ENCODE measurements at regions of chr7 and their contacts with region 1.

Region 1: GRCh38 chr7:142811154-142811737 is 40.5 kb downstream of the PRSS2 start:
- DNase-seq: peak; percentile 86
- H3K4me3 Mint-ChIP-seq: peak overlapping the region; percentile 73
- H3K27ac Mint-ChIP-seq: peak overlapping the region; percentile 99
- H3K4me1 Mint-ChIP-seq: peaks cover 75% of the 10 kb centered on the region
- H3K27me3 Mint-ChIP-seq: peaks cover 2% of the 10 kb centered on the region

Region 2: GRCh38 chr7:142301923-142302550 is 509.2 kb before region 1 on chr7:
- intact Hi-C with region 1: loop called (anchors 1 kb)
- DNase-seq: peak; percentile 65
- H3K4me3 Mint-ChIP-seq: no peak overlapping the region
- H3K27ac Mint-ChIP-seq: no peak overlapping the region
- H3K4me1 Mint-ChIP-seq: peaks cover 5% of the 10 kb centered on the region
- H3K27me3 Mint-ChIP-seq: peaks cover 19% of the 10 kb centered on the region

Region 3: DNA sequence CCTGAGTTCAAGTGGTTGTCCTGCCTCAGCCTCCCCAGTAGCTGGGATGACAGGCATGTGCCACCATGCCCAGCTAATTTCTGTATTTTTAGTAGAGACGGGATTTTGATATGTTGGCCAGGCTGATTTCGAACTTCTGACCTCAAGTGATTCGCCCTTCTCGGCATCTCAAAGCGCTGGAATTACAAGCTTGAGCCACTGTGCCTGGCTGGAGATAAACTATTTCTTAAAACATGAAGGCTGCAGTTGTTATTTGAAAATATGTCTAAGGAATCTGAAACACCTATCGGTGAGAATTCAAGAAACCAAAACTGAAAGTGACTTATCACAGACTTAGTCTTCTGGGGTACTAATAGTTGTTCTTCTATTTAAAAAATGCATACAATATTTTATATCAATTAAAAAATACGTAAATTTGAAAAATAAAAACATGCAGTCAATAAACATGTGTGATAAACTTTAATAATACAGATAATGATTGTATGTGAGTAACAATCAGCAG is 376.5 kb before region 1 on chr7:
- intact Hi-C with region 1: loop called (anchors 1 kb)
- DNase-seq: no peak
- H3K4me3 Mint-ChIP-seq: peak overlapping the region; percentile 69
- H3K27ac Mint-ChIP-seq: peak overlapping the region; percentile 55
- H3K4me1 Mint-ChIP-seq: peaks cover 35% of the 10 kb centered on the region
- H3K27me3 Mint-ChIP-seq: peaks cover 10% of the 10 kb centered on the region

Region 4: DNA sequence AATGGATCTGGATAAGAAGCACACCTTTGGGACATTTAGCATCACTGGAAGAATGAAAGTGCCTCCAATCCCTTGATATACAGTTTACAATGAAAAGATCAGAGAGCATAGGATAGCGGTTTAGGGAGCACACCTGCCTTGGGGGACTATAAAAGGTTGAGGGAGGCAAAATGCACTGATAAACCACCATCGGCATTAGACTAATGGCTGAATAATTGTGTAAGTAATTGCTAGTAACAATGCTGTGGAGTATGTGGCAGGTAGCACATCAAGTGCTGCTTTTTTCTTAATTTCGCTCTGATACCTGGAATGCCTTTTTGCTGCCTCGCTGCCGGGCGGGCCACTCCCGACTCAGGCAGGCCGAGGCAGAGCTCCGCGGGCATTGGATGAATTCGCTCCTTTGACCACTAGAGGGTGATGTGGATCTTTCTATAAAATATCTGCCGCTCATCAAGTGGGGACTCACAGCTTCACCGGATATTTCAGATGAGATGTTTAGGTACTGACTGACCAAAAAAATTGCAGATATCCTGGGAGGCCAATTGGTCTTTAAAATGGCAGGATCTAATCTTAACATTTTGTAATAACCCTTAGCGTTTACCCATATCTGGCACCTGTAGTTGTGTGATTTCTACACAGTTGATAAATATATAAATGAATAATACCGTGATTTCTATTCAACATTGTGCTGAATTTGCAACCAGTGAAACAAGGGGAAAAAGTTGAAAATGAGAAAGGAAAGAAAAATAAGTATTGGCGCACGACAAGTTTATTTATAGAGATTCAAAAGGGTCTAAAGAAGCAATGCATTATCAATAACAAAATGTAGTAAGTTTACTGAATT is 178.7 kb before region 1 on chr7:
- intact Hi-C with region 1: loop called (anchors 1 kb)
- DNase-seq: peak; percentile 86
- H3K4me3 Mint-ChIP-seq: no peak overlapping the region
- H3K27ac Mint-ChIP-seq: no peak overlapping the region
- H3K4me1 Mint-ChIP-seq: peaks cover 13% of the 10 kb centered on the region
- H3K27me3 Mint-ChIP-seq: peaks cover 12% of the 10 kb centered on the region

Region 5: DNA sequence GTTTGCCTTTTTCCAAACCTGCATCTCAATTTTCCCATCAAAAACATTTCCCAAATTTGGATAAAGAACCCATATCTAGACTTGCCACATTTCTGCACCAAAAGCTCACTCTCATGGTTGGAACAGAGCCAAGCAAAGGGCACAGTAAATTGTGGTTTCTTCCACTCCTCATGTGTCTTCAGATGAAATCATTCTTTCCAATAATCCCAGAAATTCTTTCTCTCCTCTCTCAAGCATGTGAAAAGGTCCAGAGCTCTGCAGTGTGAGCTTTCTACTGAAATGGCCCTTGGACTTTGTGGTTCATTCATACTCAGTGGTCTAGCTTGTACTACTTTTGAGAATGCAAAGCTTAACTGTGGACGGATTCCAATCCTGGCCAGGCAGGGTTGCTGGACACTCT is 20.7 kb before region 1 on chr7:
- intact Hi-C with region 1: loop called (anchors 1 kb)
- DNase-seq: peak; percentile 58
- H3K4me3 Mint-ChIP-seq: peak overlapping the region; percentile 100
- H3K27ac Mint-ChIP-seq: peak overlapping the region; percentile 93
- H3K4me1 Mint-ChIP-seq: peaks cover 33% of the 10 kb centered on the region
- H3K27me3 Mint-ChIP-seq: no peaks in the 10 kb centered on the region

Region 6: DNA sequence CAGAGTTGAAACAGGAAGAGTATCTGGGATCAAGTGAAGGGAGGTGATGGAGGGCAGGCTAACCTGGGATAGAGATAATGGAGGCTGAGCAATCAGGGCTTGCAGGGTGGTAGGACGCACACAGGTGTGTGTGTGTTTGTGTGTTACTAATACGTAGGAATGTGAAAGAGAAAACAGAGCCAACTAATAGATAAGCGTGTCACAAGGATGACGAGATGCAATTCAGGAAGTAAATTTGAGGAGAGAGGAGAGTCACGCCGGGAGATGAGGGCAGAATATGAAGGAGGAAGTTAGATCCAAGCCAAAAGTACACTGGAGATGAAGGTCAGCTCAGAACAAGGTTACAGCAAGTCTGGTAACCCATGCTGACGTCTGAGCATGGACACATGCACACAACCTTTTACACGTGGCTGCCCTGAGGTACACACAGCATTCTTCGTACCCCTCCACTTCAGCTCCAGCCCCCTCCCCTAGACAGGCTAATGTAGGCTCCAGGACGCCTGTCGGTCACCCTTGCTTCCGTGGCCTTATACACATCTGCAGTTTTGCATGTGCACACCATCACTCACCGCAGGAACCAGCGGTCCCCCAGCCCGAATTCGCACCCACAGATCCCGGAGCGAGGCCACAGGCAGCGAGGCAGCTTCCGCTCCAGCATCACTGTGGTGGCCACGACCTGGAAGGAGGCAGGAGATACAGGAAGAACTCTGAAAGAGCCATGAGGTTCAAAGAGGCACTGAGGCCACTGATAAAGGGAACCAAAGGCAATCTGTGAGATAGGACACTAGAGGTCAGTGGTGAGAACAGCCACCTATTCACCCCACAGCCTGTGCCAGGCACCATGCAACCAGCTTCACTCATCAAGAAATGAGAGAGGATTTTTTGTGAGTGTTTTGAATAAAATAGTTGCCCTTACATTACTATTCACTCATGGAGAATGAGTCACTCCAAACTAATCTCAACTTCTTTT is 98.0 kb after region 1 on chr7:
- intact Hi-C with region 1: no loop called
- DNase-seq: no peak
- H3K4me3 Mint-ChIP-seq: no peak overlapping the region
- H3K27ac Mint-ChIP-seq: no peak overlapping the region
- H3K4me1 Mint-ChIP-seq: no peaks in the 10 kb centered on the region
- H3K27me3 Mint-ChIP-seq: peaks cover 13% of the 10 kb centered on the region

Region 7: DNA sequence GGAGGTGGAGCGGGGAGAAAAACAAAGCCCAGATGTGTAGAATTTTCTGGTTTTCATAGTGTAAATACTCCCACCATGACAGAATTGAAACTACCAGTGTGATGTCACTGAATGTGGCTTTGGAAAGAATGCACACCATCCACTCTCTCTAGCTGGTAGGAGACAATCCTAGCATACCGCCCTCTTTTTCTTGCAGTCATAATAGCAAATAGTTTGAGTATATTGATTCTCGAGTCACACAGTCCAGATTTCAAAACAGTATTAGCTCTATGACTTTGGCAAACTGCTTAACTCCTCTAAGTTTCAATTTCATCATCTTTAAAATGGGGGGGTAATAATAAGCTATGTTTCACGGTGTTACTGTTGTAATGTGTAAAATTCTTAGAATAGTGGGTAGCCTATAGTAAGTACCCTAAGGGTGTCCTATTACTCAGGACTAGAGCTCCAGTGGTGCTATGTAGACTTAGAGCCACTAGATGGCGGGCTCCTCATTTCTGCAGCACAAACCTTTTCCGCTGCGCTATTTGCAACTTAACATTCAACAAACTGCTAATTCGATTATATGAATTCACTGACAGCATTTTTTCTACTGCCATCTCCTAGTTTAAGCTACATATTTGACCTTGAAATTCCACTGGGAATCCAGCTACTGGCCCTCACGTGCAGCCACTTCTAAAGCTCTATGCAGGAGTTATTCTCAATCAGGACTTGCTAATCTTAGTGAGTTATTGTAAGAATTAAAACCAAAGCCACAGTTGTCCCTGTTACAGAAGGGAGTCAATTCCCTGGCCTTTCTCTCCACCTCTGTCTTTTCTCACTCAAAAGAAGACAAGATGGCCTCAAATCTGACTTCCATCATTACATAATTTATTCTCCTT is 429.3 kb after region 1 on chr7:
- intact Hi-C with region 1: loop called (anchors 5 kb)
- DNase-seq: peak; percentile 92
- H3K4me3 Mint-ChIP-seq: peak overlapping the region; percentile 11
- H3K27ac Mint-ChIP-seq: peak overlapping the region; percentile 82
- H3K4me1 Mint-ChIP-seq: peaks cover 44% of the 10 kb centered on the region
- H3K27me3 Mint-ChIP-seq: peaks cover 15% of the 10 kb centered on the region